ENCODE measurements at regions of chr2 and their contacts with region 1.

Region 1: DNA sequence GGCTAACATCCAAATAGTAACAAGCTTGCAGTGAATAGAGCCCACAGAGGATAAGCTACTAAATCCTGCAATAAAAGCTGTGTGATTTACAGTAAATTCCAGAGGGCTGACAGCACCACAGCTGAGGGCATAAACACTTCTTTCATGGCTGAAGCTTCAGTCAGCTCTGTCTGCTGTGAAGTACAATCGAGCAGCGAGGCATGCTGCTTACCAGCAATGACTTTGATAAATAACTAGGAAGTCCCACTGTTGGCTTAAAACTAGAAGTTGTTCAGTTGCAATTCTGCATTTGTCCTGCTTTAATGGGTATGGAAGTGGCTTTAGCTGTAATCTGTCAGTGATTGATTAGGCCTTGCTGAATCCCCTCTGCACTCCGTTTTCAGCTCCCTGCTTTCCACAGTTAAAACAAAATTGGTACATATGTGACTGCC is 65.2 kb upstream of the FIGN start:
- DNase-seq: peak; percentile 21
- ATAC-seq: peak; percentile 92
- H3K4me3 ChIP-seq: no peak overlapping the region
- H3K27ac ChIP-seq: no peak overlapping the region
- H3K4me1 ChIP-seq: no peaks in the 10 kb centered on the region
- H3K27me3 ChIP-seq: no peaks in the 10 kb centered on the region
- CTCF ChIP-seq: no peak

Region 2: GRCh38 chr2:163859951-163860350 is 59.0 kb after region 1 on chr2:
- CTCF ChIA-PET with region 1: no interaction called
- POLR2A ChIA-PET with region 1: no interaction called
- intact Hi-C with region 1: loop called (anchors 5 kb)
- DNase-seq: no peak
- ATAC-seq: no peak
- H3K4me3 ChIP-seq: no peak overlapping the region
- H3K27ac ChIP-seq: no peak overlapping the region
- H3K4me1 ChIP-seq: no peaks in the 10 kb centered on the region
- H3K27me3 ChIP-seq: no peaks in the 10 kb centered on the region
- CTCF ChIP-seq: no peak

Region 3: DNA sequence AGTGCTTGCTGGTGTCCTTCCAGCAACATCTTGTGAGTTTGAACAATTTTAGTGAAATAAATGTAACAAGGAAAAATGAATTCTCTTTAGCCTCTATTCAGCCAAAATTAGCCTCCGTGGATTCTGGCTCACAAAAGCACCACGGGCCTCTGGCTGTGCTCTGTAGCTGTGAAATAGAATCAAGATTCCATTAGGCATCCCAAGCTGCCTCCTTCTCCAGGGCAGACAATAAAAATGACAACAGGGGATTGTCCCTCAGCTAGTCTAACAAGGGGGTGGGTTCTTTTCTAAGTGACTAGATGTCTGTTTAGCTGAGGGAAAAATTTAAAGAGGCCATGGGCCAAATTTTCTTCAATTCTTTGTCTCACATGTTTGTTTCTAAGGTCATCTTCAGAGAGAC is 189.6 kb after region 1 on chr2:
- CTCF ChIA-PET with region 1: no interaction called
- POLR2A ChIA-PET with region 1: no interaction called
- intact Hi-C with region 1: no loop called
- DNase-seq: no peak
- ATAC-seq: no peak
- H3K4me3 ChIP-seq: no peak overlapping the region
- H3K27ac ChIP-seq: no peak overlapping the region
- H3K4me1 ChIP-seq: no peaks in the 10 kb centered on the region
- H3K27me3 ChIP-seq: peaks cover 59% of the 10 kb centered on the region
- CTCF ChIP-seq: no peak